Activated CD4-positive, alpha-beta T cell treated with anti-CD3 and anti-CD28 coated beads, Interleukin-2, amount 10 ng/mL, durations not matched to agents 24 days and 14 days (primary cell): ENCODE measurements at regions of chr12 and their contacts with region 1.

Region 1: GRCh38 chr12:47715393-47715876 is 9.6 kb upstream of the RPAP3 start:
- DNase-seq: peak; percentile 93
- H3K4me3 Mint-ChIP-seq: no peak overlapping the region
- H3K27ac Mint-ChIP-seq: no peak overlapping the region
- H3K4me1 Mint-ChIP-seq: peaks cover 25% of the 10 kb centered on the region
- H3K27me3 Mint-ChIP-seq: no peaks in the 10 kb centered on the region

Region 2: DNA sequence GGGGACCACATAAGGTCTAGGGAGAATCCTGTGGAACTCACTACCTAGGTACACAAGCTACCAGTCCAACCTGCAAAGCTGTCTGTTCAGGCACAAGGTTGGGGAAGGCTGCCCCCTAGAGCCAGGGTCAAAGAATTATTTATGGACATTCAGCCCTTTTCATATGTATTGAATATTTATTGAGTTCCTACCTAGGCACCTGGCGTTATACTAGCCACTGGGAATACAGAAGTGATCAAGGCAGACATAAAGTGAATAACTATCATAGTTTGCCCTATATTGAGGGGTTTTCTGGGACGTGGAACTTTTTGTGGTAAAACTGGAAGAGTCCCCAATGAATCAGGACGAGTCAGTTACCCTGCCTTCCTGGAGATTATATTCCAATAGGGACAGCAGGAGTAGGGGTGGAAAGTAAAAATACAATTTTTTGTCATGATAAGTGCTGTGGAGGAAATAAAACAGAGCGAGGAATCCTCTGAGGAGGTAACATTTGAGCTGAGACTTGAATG is 51.8 kb after region 1 on chr12:
- intact Hi-C with region 1: loop called (anchors 1 kb)
- DNase-seq: peak; percentile 90
- H3K4me3 Mint-ChIP-seq: no peak overlapping the region
- H3K27ac Mint-ChIP-seq: no peak overlapping the region
- H3K4me1 Mint-ChIP-seq: peaks cover 12% of the 10 kb centered on the region
- H3K27me3 Mint-ChIP-seq: peaks cover 14% of the 10 kb centered on the region

Region 3: GRCh38 chr12:47808050-47808449 is 92.6 kb after region 1 on chr12:
- intact Hi-C with region 1: no loop called
- DNase-seq: peak; percentile 95
- H3K4me3 Mint-ChIP-seq: peak overlapping the region; percentile 80
- H3K27ac Mint-ChIP-seq: peak overlapping the region; percentile 99
- H3K4me1 Mint-ChIP-seq: peaks cover 92% of the 10 kb centered on the region
- H3K27me3 Mint-ChIP-seq: no peaks in the 10 kb centered on the region

Region 4: DNA sequence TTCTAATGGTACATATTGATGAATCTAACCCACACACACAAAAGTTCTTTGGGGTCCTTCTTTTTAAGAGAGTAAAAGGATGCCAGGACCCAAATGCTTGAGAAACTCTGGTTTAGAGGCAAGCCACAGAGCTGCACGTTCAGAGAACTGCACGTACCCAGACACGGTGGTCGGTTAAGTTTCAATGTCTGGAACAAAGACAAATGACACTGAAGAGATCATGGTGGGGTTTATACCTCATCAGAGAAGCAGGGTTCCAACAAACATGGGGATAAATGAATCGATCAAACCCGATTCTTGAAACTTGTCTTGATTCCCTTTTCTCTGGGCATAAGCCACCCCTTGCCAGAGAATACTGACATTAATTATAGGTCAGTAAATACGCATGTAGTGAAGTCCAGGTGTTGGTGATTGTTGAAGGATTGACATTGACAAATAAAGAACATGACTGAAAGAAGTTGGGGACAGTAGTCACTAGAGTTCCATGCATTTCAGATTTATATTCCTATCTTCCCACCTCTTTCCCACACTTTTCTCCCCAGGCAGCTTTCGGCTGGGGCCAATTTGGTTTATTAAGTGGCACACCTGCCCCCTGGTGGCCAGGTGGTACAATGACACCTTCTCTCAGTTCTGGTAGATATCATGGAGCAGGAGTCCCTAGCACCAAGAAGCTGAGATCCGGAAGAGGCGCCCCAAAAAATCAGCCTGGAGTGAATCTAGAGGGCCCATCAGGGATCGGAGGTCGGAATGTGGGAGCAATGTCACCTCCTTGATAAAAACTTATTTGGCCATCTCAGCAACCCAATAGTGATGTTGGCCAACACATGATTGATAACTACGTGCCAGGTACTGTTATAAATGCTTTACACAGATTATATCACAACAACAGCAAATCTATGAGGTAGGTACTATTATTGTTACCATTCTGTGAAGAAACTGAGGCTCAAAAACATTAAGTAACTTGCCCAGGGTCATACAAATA is 122.0 kb after region 1 on chr12:
- intact Hi-C with region 1: loop called (anchors 1 kb)
- DNase-seq: peak; percentile 89
- H3K4me3 Mint-ChIP-seq: no peak overlapping the region
- H3K27ac Mint-ChIP-seq: peak overlapping the region; percentile 17
- H3K4me1 Mint-ChIP-seq: peaks cover 66% of the 10 kb centered on the region
- H3K27me3 Mint-ChIP-seq: no peaks in the 10 kb centered on the region

Region 5: GRCh38 chr12:48165094-48165981 is 449.9 kb after region 1 on chr12:
- intact Hi-C with region 1: loop called (anchors 5 kb)
- DNase-seq: peak; percentile 88
- H3K4me3 Mint-ChIP-seq: no peak overlapping the region
- H3K27ac Mint-ChIP-seq: no peak overlapping the region
- H3K4me1 Mint-ChIP-seq: no peaks in the 10 kb centered on the region
- H3K27me3 Mint-ChIP-seq: peaks cover 30% of the 10 kb centered on the region